ENCODE measurements at regions of chr6 and their contacts with region 1.

Region 1: DNA sequence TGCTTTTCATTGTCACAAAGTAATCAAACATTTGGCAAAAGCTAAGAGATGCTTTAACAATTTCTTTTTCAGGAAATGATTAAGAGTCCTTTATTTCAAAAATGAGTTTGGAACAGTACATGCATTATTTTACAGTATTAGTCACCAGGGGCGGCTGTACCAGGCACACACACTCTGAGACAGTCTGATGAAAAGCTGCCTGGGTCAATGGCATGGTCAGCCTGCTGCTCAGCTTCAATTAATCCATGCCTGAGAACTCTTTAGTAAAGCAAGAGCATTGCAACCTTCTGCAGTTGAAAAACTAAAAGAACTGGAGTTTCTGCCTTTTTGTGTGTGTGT is 105.5 kb downstream of the TULP4 start:
- DNase-seq: peak; percentile 76
- ATAC-seq: peak; percentile 98
- H3K4me3 ChIP-seq: peak overlapping the region; percentile 40; the same call in 1 of the 2 replicates
- H3K27ac ChIP-seq: peak overlapping the region; percentile 93
- H3K4me1 ChIP-seq: peaks cover 26% of the 10 kb centered on the region
- H3K27me3 ChIP-seq: no peaks in the 10 kb centered on the region
- CTCF ChIP-seq: no peak

Region 2: GRCh38 chr6:158242071-158242606 is 175.6 kb before region 1 on chr6:
- CTCF ChIA-PET with region 1: no interaction called
- POLR2A ChIA-PET with region 1: no interaction called
- intact Hi-C with region 1: loop called (anchors 5 kb)
- DNase-seq: no peak
- ATAC-seq: peak; percentile 12; the same call in 1 of the 2 replicates
- H3K4me3 ChIP-seq: no peak overlapping the region; the same call in 1 of the 2 replicates
- H3K27ac ChIP-seq: peak overlapping the region; percentile 9; the same call in 1 of the 2 replicates
- H3K4me1 ChIP-seq: peaks cover 26% of the 10 kb centered on the region
- H3K27me3 ChIP-seq: no peaks in the 10 kb centered on the region
- CTCF ChIP-seq: no peak

Region 3: GRCh38 chr6:158460602-158461169 is 43.0 kb after region 1 on chr6:
- CTCF ChIA-PET with region 1: no interaction called
- POLR2A ChIA-PET with region 1: interaction called, 10 read pairs
- intact Hi-C with region 1: no loop called
- DNase-seq: peak; percentile 63
- ATAC-seq: peak; percentile 92
- H3K4me3 ChIP-seq: no peak overlapping the region
- H3K27ac ChIP-seq: peak overlapping the region; percentile 22
- H3K4me1 ChIP-seq: peaks cover 22% of the 10 kb centered on the region
- H3K27me3 ChIP-seq: no peaks in the 10 kb centered on the region
- CTCF ChIP-seq: no peak

Region 4: GRCh38 chr6:158666628-158667359 is 249.1 kb after region 1 on chr6:
- CTCF ChIA-PET with region 1: no interaction called
- POLR2A ChIA-PET with region 1: no interaction called
- intact Hi-C with region 1: no loop called
- DNase-seq: no peak
- ATAC-seq: no peak
- H3K4me3 ChIP-seq: no peak overlapping the region
- H3K27ac ChIP-seq: no peak overlapping the region
- H3K4me1 ChIP-seq: peaks cover 15% of the 10 kb centered on the region
- H3K27me3 ChIP-seq: no peaks in the 10 kb centered on the region
- CTCF ChIP-seq: no peak